Activated T-helper 1 cell treated with anti-CD3 and anti-CD28 coated beads, Interleukin-12 subunit alpha, Interleukin-12 subunit beta, Interleukin-2, Interleukin-4 antibody, amounts not matched to agents 30 ng/mL and 10 ng/mL and 1 ng/mL, durations not matched to agents 14 hours and 24 hours and 36 hours (primary cell): ENCODE measurements at regions of chr1 and their contacts with region 1.

Region 1: GRCh38 chr1:235045034-235045720 is 83.5 kb downstream of the TOMM20 start:
- DNase-seq: no peak
- H3K4me3 Mint-ChIP-seq: peak overlapping the region; percentile 12
- H3K27ac Mint-ChIP-seq: peak overlapping the region; percentile 75
- H3K4me1 Mint-ChIP-seq: peaks cover 58% of the 10 kb centered on the region
- H3K27me3 Mint-ChIP-seq: no peaks in the 10 kb centered on the region

Region 2: DNA sequence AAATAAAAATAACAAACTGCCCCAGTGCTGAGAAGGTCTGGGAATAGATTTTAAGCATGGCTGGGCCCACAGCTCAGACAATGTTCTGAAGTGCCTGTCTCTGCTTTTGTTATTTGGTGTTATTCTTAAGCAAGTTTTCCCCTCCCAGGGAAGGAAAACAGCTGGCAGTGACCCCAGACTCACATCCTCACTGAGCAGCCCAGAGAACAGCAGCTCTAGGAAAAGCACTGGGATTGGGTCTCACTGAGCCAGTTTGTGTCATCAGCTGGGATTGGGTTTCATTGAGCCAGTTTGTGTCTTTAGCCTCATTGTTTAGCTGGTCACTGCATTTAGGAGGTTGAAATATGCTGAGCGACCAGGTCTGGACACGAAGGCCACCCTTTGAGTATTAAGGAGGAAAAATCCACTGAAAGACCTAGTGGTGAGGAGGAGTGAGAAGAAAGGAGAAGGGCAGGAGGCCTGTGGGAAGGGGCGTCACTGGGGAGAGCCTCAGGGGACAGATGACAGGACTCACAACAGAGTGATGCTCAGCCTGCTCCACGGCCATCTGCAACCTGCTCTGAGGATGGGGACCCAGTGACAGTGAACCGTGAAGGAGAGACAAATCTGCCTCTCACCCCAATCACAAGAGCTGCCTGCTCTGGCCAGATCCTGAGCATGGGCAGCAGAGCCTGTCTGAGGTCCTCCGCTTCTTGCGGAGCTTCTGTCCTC is 20.3 kb before region 1 on chr1:
- intact Hi-C with region 1: loop called (anchors 2 kb)
- DNase-seq: no peak
- H3K4me3 Mint-ChIP-seq: no peak overlapping the region
- H3K27ac Mint-ChIP-seq: peak overlapping the region; percentile 30
- H3K4me1 Mint-ChIP-seq: peaks cover 48% of the 10 kb centered on the region
- H3K27me3 Mint-ChIP-seq: no peaks in the 10 kb centered on the region

Region 3: DNA sequence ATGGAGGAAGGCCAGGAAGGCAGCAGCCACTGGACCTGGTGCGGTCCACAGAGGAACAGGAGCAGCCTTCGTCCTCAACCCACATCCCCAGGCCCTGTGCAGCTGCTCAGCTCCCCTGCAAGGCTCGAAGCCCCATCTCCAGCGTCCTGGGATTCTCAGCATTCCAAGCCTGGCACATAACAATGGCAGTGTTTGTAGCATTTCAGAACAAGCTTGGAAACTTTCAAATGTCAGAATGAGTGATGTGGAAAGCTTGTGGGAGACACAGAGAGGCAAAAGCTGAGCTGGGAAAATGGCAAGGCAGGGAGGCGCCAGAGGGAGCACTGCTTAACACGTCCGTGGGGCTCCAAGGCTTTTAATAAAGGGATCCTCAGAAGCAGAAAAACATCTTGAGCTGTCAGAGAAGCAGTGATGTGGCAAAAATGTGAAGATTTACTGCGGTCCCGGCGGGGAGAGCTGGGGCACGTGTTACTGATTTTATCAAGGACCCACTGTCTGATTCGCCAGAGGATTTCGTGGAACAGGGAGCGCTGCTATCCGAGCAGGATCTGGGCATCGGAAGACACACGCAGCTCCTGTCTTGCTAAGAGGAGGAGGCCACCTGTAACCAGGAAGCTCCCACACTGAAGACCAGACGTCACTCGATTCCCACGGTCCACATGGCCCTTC is 45.4 kb after region 1 on chr1:
- intact Hi-C with region 1: no loop called
- DNase-seq: no peak
- H3K4me3 Mint-ChIP-seq: no peak overlapping the region
- H3K27ac Mint-ChIP-seq: no peak overlapping the region
- H3K4me1 Mint-ChIP-seq: peaks cover 13% of the 10 kb centered on the region
- H3K27me3 Mint-ChIP-seq: no peaks in the 10 kb centered on the region